ENCODE measurements at regions of chr1 and their contacts with region 1.

Region 1: DNA sequence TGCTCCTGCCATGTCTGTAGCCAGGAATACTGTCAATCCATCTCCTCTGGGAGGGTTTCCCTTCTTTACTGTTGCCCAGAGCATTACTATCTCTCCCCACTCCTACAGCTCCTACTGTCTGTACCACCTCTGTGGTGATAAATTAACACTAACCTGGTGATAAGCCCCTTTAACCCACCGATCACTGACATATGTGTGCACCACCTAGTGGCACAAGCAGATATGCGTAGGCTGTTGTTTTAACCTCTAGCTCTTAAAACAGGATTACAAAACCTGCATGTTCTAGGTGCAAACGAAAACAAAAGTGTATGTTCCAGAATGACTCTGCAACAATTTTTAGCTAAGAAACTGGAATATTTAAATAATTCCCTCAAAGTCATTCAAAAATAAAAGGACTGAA is 93.9 kb upstream of the BEND5 start:
- DNase-seq: no peak
- H3K4me3 ChIP-seq: no peak overlapping the region
- H3K27ac ChIP-seq: no peak overlapping the region
- H3K27me3 ChIP-seq: no peaks in the 10 kb centered on the region
- CTCF ChIP-seq: peak; percentile 31; the same call in 1 of the 2 replicates

Region 2: GRCh38 chr1:48750109-48750508 is 120.5 kb before region 1 on chr1:
- CTCF ChIA-PET with region 1: no interaction called
- POLR2A ChIA-PET with region 1: no interaction called
- DNase-seq: no peak
- H3K4me3 ChIP-seq: no peak overlapping the region
- H3K27ac ChIP-seq: no peak overlapping the region
- H3K27me3 ChIP-seq: no peaks in the 10 kb centered on the region
- CTCF ChIP-seq: no peak

Region 3: GRCh38 chr1:48807554-48808260 is 62.9 kb before region 1 on chr1:
- CTCF ChIA-PET with region 1: no interaction called
- POLR2A ChIA-PET with region 1: no interaction called
- DNase-seq: no peak
- H3K4me3 ChIP-seq: no peak overlapping the region
- H3K27ac ChIP-seq: no peak overlapping the region
- H3K27me3 ChIP-seq: no peaks in the 10 kb centered on the region
- CTCF ChIP-seq: no peak

Region 4: DNA sequence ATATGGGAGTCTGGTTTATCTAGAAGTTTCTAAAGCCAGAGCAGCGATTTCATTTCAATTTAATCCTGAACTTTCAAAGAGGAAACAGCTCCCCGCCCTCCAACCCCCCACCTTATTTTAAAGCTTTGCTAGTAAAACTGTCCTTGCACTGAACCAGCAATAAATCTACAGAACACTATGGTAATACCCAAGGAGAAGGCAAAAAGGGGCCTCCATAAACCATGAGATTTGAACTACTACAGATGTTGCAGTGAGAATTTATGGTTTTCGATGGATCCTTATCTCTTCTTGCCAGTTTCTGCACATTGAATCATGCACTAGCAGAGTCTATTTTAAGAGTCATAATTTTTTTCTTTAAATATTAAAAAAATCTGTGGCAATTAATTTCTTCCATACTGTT is 29.1 kb before region 1 on chr1:
- CTCF ChIA-PET with region 1: interaction called, 10 read pairs
- POLR2A ChIA-PET with region 1: no interaction called
- DNase-seq: no peak
- H3K4me3 ChIP-seq: no peak overlapping the region
- H3K27ac ChIP-seq: no peak overlapping the region
- H3K27me3 ChIP-seq: no peaks in the 10 kb centered on the region
- CTCF ChIP-seq: no peak

Region 5: DNA sequence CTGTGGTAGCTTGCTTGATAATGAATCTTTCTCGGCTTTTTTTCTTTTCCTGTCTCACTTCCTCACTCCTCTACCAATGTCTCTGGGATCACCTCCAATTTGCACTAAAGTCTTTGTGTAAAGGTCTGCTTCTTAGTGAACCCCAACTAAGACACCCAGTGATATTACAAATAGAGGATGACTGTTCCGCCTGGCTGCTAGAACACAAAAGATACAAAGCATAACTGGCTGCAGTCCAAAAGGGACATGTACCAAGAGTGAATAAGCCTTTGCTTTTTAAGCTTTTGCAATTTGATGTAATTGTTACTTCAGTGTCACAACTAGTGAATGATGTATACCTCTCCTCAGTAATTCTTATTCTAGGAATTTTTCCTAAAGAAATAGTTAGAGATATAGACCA is 11.2 kb before region 1 on chr1:
- CTCF ChIA-PET with region 1: no interaction called
- POLR2A ChIA-PET with region 1: no interaction called
- DNase-seq: no peak
- H3K4me3 ChIP-seq: no peak overlapping the region
- H3K27ac ChIP-seq: no peak overlapping the region
- H3K27me3 ChIP-seq: no peaks in the 10 kb centered on the region
- CTCF ChIP-seq: no peak